Activated naive CD4-positive, alpha-beta T cell treated with anti-CD3 and anti-CD28 coated beads for 36 hours (primary cell): ENCODE measurements at regions of chr18 and their contacts with region 1.

Region 1: GRCh38 chr18:23131693-23132319 is 3.5 kb upstream of the CABLES1 start:
- DNase-seq: peak; percentile 75
- H3K4me3 Mint-ChIP-seq: no peak overlapping the region
- H3K27ac Mint-ChIP-seq: no peak overlapping the region
- H3K4me1 Mint-ChIP-seq: peaks cover 14% of the 10 kb centered on the region
- H3K27me3 Mint-ChIP-seq: peaks cover 28% of the 10 kb centered on the region

Region 2: GRCh38 chr18:22800551-22800951 is 331.3 kb before region 1 on chr18:
- CTCF ChIA-PET with region 1: interaction called, 3 read pairs
- intact Hi-C with region 1: loop called (anchors 5 kb)
- DNase-seq: no peak
- H3K4me3 Mint-ChIP-seq: no peak overlapping the region
- H3K27ac Mint-ChIP-seq: no peak overlapping the region
- H3K4me1 Mint-ChIP-seq: no peaks in the 10 kb centered on the region
- H3K27me3 Mint-ChIP-seq: no peaks in the 10 kb centered on the region

Region 3: GRCh38 chr18:23053776-23054457 is 77.9 kb before region 1 on chr18:
- CTCF ChIA-PET with region 1: no interaction called
- intact Hi-C with region 1: no loop called
- DNase-seq: no peak
- H3K4me3 Mint-ChIP-seq: no peak overlapping the region
- H3K27ac Mint-ChIP-seq: no peak overlapping the region
- H3K4me1 Mint-ChIP-seq: peaks cover 14% of the 10 kb centered on the region
- H3K27me3 Mint-ChIP-seq: no peaks in the 10 kb centered on the region

Region 4: DNA sequence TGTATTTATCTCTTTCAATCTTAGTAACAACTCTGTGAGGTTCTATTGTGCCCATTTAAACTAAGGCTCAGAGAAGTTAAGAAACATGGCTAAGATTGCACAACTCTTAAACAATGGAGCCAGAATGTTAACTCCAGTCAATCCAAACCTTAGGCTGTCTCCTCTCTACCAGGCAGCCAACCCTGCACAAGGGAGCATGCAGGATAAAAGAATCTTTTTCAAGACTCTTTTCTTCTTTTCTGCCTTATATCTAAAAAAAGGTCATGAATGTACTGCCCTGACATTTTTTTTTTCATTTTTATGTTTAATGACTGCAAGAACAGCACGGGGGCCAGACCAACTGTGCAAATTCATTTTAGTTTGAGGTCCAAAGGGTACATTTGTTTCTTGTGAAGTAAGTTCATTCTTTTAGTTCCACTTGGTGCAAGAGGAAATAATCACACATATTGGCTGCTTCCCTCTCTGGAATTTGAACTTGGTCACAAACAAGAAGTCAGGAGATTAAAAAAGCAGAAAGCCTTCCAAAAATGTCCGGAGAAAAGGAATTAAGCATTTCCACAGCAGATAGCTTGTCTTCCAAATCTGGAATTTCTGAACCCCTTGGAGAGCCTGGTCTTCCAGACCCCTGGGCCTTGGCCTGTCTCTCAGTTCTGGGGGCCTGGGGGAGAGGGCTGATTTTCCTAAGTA is 225.3 kb after region 1 on chr18:
- CTCF ChIA-PET with region 1: interaction called, 7 read pairs
- intact Hi-C with region 1: loop called (anchors 1 kb)
- DNase-seq: no peak
- H3K4me3 Mint-ChIP-seq: no peak overlapping the region
- H3K27ac Mint-ChIP-seq: no peak overlapping the region
- H3K4me1 Mint-ChIP-seq: peaks cover 14% of the 10 kb centered on the region
- H3K27me3 Mint-ChIP-seq: no peaks in the 10 kb centered on the region

Region 5: GRCh38 chr18:23406271-23406787 is 274.5 kb after region 1 on chr18:
- CTCF ChIA-PET with region 1: interaction called, 28 read pairs
- intact Hi-C with region 1: loop called (anchors 1 kb)
- DNase-seq: no peak
- H3K4me3 Mint-ChIP-seq: no peak overlapping the region
- H3K27ac Mint-ChIP-seq: no peak overlapping the region
- H3K4me1 Mint-ChIP-seq: no peaks in the 10 kb centered on the region
- H3K27me3 Mint-ChIP-seq: no peaks in the 10 kb centered on the region

Region 6: DNA sequence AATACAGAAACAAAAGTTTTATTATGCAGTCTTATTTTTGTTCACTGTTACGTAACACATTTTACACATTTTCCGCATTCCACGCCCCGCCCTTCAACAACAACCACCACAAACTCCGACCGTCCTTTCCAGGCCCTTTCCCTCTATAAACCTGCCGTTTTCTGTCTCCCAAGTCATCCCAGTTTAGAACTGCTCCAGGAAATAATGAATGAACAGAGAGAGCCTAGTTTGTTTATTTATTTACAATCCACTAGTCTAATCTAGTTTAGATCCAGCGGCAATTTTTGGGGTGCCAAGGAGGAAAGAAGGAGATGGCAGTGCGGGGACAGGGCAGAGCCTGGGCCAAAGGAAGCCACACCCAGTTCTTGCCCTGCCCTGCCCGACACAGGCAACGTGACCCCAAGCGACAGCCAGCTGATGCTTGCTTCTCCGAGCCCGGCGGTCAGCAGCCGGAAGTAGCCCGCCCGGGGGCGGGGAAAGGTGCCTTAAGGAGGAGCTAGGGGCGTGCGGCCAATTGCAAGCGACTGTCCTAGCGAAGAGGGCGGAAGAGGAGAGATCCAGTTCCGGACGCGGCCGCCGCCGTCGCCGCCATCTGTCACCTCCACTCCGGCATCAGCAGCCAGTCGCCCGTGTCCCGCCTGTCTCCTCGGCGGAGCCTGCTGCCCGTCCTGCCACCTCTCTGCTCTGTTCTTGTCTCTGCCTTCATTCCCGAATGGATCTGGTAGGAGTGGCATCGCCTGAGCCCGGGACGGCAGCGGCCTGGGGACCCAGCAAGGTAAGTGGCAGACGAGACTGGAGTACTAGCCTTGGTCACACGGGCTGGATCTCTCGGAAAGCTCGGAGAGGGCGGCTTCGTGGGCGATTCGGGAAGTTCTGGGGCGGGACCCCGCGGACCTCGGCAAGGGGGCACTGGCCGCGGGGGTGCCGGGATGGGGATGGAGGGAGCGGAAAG is 321.2 kb after region 1 on chr18 and contains the start of gene RIOK3:
- CTCF ChIA-PET with region 1: no interaction called
- intact Hi-C with region 1: loop called (anchors 1 kb)
- DNase-seq: peak; percentile 94
- H3K4me3 Mint-ChIP-seq: peak within 1 kb of the TSS; percentile 99
- H3K27ac Mint-ChIP-seq: peak within 1 kb of the TSS; percentile 91
- H3K4me1 Mint-ChIP-seq: peaks cover 42% of the 10 kb centered on the region
- H3K27me3 Mint-ChIP-seq: no peaks in the 10 kb centered on the region
- total RNA-seq, gene RIOK3: 53.8 to 59.5 TPM

Region 7: DNA sequence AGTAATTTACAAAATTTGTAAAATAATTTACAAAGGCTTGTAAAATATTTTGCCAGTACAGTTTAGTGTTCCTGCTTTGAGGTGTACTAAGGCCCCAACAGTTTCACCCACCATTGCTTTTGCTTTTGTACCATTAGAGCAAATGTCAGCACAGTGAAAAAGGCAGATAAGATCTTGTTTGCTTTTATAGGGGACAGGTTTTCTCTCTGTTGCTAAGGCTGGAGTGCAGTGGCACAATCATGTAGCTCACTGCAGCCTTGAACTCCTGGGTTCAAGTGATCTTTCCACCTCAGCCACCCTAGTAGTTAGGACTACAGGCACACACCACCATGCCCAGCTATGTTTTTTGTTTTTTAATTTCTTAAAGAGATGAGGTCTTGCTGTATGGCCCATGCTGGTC is 474.1 kb after region 1 on chr18:
- CTCF ChIA-PET with region 1: no interaction called
- intact Hi-C with region 1: no loop called
- DNase-seq: no peak
- H3K4me3 Mint-ChIP-seq: no peak overlapping the region
- H3K27ac Mint-ChIP-seq: no peak overlapping the region
- H3K4me1 Mint-ChIP-seq: no peaks in the 10 kb centered on the region
- H3K27me3 Mint-ChIP-seq: no peaks in the 10 kb centered on the region

Region 8: GRCh38 chr18:23619388-23619881 is 487.6 kb after region 1 on chr18:
- CTCF ChIA-PET with region 1: no interaction called
- intact Hi-C with region 1: no loop called
- DNase-seq: peak; percentile 9
- H3K4me3 Mint-ChIP-seq: peak overlapping the region; percentile 50
- H3K27ac Mint-ChIP-seq: no peak overlapping the region
- H3K4me1 Mint-ChIP-seq: no peaks in the 10 kb centered on the region
- H3K27me3 Mint-ChIP-seq: peaks cover 36% of the 10 kb centered on the region

Region 9: GRCh38 chr18:23719634-23720201 is 587.9 kb after region 1 on chr18:
- CTCF ChIA-PET with region 1: no interaction called
- intact Hi-C with region 1: no loop called
- DNase-seq: no peak
- H3K4me3 Mint-ChIP-seq: no peak overlapping the region
- H3K27ac Mint-ChIP-seq: no peak overlapping the region
- H3K4me1 Mint-ChIP-seq: no peaks in the 10 kb centered on the region
- H3K27me3 Mint-ChIP-seq: peaks cover 2% of the 10 kb centered on the region